ENCODE measurements at regions of chr7 and their contacts with region 1.

Region 1: DNA sequence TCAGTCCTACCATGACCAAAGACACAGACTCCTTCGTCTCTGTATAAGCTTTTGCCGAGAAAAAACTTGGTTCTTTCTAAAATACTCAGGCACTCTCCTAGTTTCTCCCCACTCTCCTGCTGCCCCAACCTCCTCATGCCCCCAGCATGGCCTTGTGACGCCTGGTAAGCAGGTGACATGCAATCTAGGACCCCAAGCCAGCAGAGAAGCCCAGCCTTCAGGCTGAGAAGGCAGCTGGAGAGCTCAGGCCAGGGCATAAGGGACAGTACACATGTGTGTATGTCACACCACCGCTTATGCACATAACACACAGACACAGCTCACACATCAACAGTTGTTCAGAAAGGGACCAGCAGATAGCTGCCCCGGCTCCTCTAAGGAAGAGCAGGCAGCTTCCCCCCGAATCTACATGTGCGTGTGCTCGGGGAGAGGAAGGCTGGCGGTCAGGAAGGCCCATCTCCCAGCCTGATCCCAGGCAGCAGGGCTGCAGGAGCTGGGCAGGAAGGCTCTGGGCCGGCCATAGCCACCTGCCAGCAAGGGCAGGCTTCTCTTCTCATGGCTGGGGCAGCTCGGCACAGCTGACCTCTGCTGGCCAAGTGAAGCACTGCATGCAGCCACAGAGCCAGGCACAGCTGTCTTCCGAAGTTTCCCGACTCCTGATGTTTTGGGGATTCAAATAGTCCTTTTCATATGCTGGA is 8.5 kb downstream of the DDX56 start:
- DNase-seq: no peak
- H3K4me3 ChIP-seq: no peak overlapping the region
- H3K27me3 ChIP-seq: no peaks in the 10 kb centered on the region
- CTCF ChIP-seq: peak; percentile 98

Region 2: DNA sequence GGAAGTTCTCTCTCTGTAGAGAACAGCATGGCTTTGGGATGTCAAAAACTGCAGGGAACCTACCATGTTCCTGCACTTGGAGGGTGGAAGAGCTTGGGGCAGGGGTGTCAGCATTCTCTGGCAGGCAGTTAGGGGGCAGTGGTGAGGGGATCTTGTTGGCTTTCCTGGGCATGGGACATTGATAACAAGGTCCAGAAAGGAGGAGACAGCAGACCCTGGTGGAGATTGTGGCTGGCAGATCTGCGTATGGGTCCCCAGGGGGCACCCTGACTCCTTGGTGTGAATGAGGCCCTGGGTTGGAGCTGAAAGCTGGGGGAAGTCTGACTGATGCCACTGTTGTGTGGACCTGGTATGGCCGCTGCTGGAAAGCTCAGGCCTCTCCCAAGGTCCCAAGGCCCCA is 216.9 kb before region 1 on chr7:
- CTCF ChIA-PET with region 1: interaction called, 62 read pairs
- POLR2A ChIA-PET with region 1: no interaction called
- DNase-seq: no peak
- H3K4me3 ChIP-seq: no peak overlapping the region
- H3K27me3 ChIP-seq: peaks cover 3% of the 10 kb centered on the region
- CTCF ChIP-seq: peak; percentile 68

Region 3: GRCh38 chr7:44490351-44491200 is 74.7 kb before region 1 on chr7 and contains the start of gene NUDCD3:
- CTCF ChIA-PET with region 1: interaction called, 14 read pairs
- POLR2A ChIA-PET with region 1: no interaction called
- DNase-seq: no peak
- H3K4me3 ChIP-seq: peak within 1 kb of the TSS; percentile 75
- H3K27me3 ChIP-seq: peaks cover under 1% of the 10 kb centered on the region; the same call in 1 of the 2 replicates
- CTCF ChIP-seq: peak; percentile 26; the same call in 1 of the 2 replicates
- polyA plus RNA-seq, gene NUDCD3: 78.2 and 82.8 TPM in 2 replicates

Region 4: GRCh38 chr7:44541028-44541869 is 24.0 kb before region 1 on chr7 and contains the start of gene NPC1L1:
- CTCF ChIA-PET with region 1: interaction called, 11 read pairs
- POLR2A ChIA-PET with region 1: no interaction called
- DNase-seq: no peak
- H3K4me3 ChIP-seq: no peak within 1 kb of the TSS
- H3K27me3 ChIP-seq: no peaks in the 10 kb centered on the region; the same call in 1 of the 2 replicates
- CTCF ChIP-seq: no peak
- polyA plus RNA-seq, gene NPC1L1: not detected in 2 replicates

Region 5: GRCh38 chr7:44548893-44549292 is 16.4 kb before region 1 on chr7:
- CTCF ChIA-PET with region 1: interaction called, 24 read pairs
- POLR2A ChIA-PET with region 1: no interaction called
- DNase-seq: no peak
- H3K4me3 ChIP-seq: no peak overlapping the region
- H3K27me3 ChIP-seq: peaks cover 6% of the 10 kb centered on the region; the same call in 1 of the 2 replicates
- CTCF ChIP-seq: no peak

Region 6: DNA sequence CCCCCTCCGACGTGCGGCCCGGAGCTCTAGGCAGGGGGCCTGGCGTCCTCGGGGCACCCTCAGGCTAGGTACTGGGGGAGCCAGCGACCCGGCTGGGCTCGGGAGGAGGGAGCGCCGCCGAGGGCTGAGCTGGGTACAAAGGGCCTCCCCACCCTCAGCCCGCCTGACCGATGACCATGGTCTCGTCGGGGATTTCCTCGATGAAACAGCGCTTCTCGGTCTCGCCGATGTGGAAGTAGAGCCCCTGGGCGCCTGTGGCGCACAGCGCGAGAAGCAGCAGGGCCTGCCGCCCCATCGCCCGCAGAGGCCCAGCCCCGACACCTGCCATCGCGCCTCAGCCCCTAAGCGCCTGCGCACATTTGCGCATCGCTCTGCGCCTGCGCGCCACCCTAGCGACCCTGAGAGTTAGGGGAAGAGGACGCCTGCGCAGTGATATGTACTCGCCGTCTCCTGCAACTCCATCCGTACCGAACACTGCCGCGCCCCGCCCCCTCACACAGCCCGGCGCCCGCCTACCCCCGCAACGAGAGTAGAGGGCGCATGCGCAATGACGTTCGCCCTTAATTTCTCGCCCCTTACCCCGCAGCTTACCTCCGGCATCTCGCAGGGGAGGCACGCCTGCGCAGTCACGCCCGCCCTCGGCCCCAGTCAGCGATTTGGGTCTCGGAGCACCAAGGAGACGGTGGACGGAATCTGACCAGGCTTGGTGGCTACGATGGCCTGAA is 16.8 kb after region 1 on chr7 and contains the start of gene TMED4:
- CTCF ChIA-PET with region 1: interaction called, 18 read pairs
- POLR2A ChIA-PET with region 1: no interaction called
- DNase-seq: peak; percentile 92
- H3K4me3 ChIP-seq: peak within 1 kb of the TSS; percentile 98
- H3K27me3 ChIP-seq: no peaks in the 10 kb centered on the region
- CTCF ChIP-seq: no peak
- polyA plus RNA-seq, gene TMED4: 75.7 and 80.9 TPM in 2 replicates

Measured in BJ (cell line).